Upper lobe of right lung (tissue), 1 donor: ENCODE measurements at regions of chr19 and their contacts with region 1.

Region 1: GRCh38 chr19:55141696-55142095 is 7.3 kb downstream of the TNNT1 start:
- DNase-seq: no peak
- ATAC-seq: no peak
- H3K4me3 ChIP-seq: no peak overlapping the region
- H3K27ac ChIP-seq: no peak overlapping the region
- H3K4me1 ChIP-seq: no peaks in the 10 kb centered on the region
- H3K27me3 ChIP-seq: peaks cover 58% of the 10 kb centered on the region
- CTCF ChIP-seq: no peak

Region 2: DNA sequence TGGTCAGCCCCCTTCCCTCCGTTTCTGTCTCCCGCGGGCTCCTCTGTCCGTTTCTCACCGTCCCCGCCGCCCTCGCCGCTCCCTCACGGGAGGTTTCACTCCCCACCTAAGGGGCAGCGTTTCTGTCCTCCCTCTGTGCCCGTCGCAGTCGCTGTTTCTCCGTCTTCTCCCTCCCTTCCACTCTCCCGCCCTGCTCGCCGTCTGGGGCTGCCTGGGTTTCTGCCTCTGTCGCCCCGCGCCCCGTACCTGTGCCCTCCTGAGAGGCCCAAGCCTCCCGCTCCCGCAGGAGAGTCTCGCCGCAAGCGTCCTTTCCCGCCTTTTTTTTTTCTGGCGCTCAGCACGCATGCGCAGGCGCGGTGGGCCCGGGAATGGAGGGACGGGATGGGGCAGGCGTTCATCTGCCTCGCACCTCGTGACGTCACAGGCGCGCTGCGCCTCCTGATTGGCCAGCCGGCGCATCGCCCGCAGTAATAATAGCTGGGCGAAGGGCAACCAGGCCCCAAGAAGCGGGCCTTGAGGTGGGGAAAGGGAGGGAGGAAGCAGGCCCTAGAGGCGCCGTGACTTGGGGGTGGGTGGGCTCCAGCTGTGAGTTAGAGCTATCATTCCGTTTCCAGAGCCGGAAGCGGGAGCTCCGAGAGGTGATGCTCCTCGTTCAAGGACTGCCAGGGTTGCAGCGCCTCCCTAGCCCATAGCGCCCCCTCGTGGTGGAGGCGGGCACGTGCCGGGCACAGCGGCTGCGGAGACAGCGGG is 362.0 kb after region 1 on chr19:
- intact Hi-C with region 1: loop called (anchors 5 kb)
- DNase-seq: peak; percentile 97
- ATAC-seq: peak; percentile 97
- H3K4me3 ChIP-seq: peak overlapping the region; percentile 59
- H3K27ac ChIP-seq: peak overlapping the region; percentile 65
- H3K4me1 ChIP-seq: no peaks in the 10 kb centered on the region
- H3K27me3 ChIP-seq: no peaks in the 10 kb centered on the region
- CTCF ChIP-seq: peak; percentile 100

Region 3: GRCh38 chr19:55563261-55563690 is 421.6 kb after region 1 on chr19:
- intact Hi-C with region 1: no loop called
- DNase-seq: no peak
- ATAC-seq: peak; percentile 84
- H3K4me3 ChIP-seq: no peak overlapping the region
- H3K27ac ChIP-seq: no peak overlapping the region
- H3K4me1 ChIP-seq: no peaks in the 10 kb centered on the region
- H3K27me3 ChIP-seq: no peaks in the 10 kb centered on the region
- CTCF ChIP-seq: no peak